B cell (primary cell): ENCODE measurements at regions of chr17 and their contacts with region 1.

Region 1: GRCh38 chr17:61837175-61838051 is 25.9 kb downstream of the BRIP1 start:
- DNase-seq: peak; percentile 74
- ATAC-seq: peak; percentile 62
- H3K4me3 ChIP-seq: no peak overlapping the region
- H3K4me3 Mint-ChIP-seq: no peak overlapping the region
- H3K27ac ChIP-seq: no peak overlapping the region
- H3K27ac Mint-ChIP-seq: no peak overlapping the region
- H3K4me1 ChIP-seq: peaks cover 5 to 6% of the 10 kb centered on the region in 2 donors
- H3K4me1 Mint-ChIP-seq: peaks cover 9% of the 10 kb centered on the region
- H3K27me3 ChIP-seq: no peaks in the 10 kb centered on the region
- H3K27me3 Mint-ChIP-seq: no peaks in the 10 kb centered on the region
- CTCF ChIP-seq: peak; percentile 97

Region 2: GRCh38 chr17:61635913-61636432 is 201.4 kb before region 1 on chr17:
- CTCF ChIA-PET with region 1: interaction called, 75 read pairs
- POLR2A ChIA-PET with region 1: no interaction called
- intact Hi-C with region 1: loop called (anchors 1 kb)
- DNase-seq: peak; percentile 68
- ATAC-seq: no peak
- H3K4me3 ChIP-seq: no peak overlapping the region
- H3K4me3 Mint-ChIP-seq: no peak overlapping the region
- H3K27ac ChIP-seq: no peak overlapping the region
- H3K27ac Mint-ChIP-seq: no peak overlapping the region
- H3K4me1 ChIP-seq: peaks cover 0 to 3% of the 10 kb centered on the region in 2 donors
- H3K4me1 Mint-ChIP-seq: peaks cover 6% of the 10 kb centered on the region
- H3K27me3 ChIP-seq: peaks cover 0 to 10% (median 0%) of the 10 kb centered on the region in 4 experiments
- H3K27me3 Mint-ChIP-seq: peaks cover 45% of the 10 kb centered on the region
- CTCF ChIP-seq: peak; percentile 86